IMR-90 (cell line): ENCODE measurements at regions of chr17 and their contacts with region 1.

Region 1: DNA sequence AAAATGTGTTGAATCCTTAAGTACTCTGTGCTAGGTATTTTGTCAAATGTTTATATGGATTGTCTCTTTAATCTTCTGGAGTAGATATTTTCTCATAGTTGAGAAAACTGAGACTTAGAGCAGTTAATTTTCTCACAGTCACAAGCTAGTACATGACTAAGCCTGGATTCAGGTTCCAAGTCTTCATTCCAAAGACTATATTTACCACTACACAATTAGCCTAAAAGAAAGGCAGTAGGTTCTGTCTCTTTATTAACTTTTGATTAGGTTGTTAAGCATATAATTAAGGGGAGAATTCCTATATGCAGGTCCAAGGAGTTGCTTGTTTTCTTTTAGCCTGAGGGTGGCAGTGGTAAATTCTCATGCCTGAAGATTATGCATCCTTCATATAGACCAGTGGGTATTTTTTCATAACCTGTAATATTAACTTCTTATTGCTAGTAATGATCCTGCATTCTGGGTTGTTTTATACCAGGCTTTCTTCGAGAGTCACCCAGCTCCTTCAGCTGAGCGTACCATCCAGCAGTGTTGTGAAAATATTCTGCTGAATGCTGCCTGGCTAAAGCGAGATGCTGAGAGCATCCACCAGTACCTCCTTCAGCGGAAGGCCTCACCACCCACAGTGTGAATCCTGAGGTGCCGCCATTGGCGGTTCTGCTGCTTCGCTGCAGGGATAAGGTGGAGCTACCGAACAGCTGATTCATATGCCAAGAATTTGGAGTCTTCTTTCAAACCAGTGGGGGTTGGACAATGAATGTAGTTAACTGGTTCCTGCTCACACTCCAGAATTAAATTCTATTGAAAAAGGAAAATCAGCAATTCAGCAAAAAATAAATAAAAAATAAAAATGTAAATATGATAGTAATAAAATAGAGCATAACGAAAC is 28.2 kb upstream of the KPNB1 start:
- DNase-seq: peak; percentile 91
- ATAC-seq: peak; percentile 93
- H3K4me3 ChIP-seq: no peak overlapping the region
- H3K27ac ChIP-seq: peak overlapping the region; percentile 63
- H3K4me1 ChIP-seq: peaks cover 13% of the 10 kb centered on the region
- H3K27me3 ChIP-seq: no peaks in the 10 kb centered on the region
- CTCF ChIP-seq: no peak
- POLR2A ChIP-seq: no peak
- RAD21 ChIP-seq: no peak

Region 2: DNA sequence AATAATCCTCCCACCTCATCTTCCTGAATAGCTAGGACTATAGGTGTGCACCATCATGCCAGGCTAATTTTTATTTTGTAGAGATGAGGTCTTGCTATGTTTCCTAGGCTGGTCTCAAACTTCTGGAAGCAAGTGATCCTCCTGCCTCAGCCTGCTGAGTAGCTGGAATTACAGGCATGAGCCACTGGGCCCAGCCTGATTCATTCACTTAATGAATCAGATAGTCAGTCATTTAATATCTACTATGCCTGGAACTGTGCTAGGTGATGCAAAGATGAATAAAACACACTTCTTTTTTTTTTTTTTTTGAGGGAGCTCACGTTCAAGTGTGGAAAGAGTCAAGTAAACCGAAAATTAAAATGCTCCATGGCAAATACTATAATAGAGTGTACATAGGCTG is 258.4 kb before region 1 on chr17:
- CTCF ChIA-PET with region 1: no interaction called
- POLR2A ChIA-PET with region 1: no interaction called
- dilution Hi-C with region 1: no loop called
- in situ Hi-C with region 1: no loop called
- intact Hi-C with region 1: loop called (anchors 5 kb)
- DNase-seq: no peak
- ATAC-seq: no peak
- H3K4me3 ChIP-seq: no peak overlapping the region
- H3K27ac ChIP-seq: no peak overlapping the region
- H3K4me1 ChIP-seq: no peaks in the 10 kb centered on the region
- H3K27me3 ChIP-seq: no peaks in the 10 kb centered on the region
- CTCF ChIP-seq: no peak
- POLR2A ChIP-seq: no peak
- RAD21 ChIP-seq: no peak

Region 3: GRCh38 chr17:47404006-47404405 is 217.5 kb before region 1 on chr17:
- CTCF ChIA-PET with region 1: no interaction called
- POLR2A ChIA-PET with region 1: no interaction called
- dilution Hi-C with region 1: no loop called
- in situ Hi-C with region 1: no loop called
- intact Hi-C with region 1: no loop called
- DNase-seq: no peak
- ATAC-seq: no peak
- H3K4me3 ChIP-seq: no peak overlapping the region
- H3K27ac ChIP-seq: no peak overlapping the region
- H3K4me1 ChIP-seq: no peaks in the 10 kb centered on the region
- H3K27me3 ChIP-seq: no peaks in the 10 kb centered on the region
- CTCF ChIP-seq: no peak
- POLR2A ChIP-seq: no peak
- RAD21 ChIP-seq: no peak

Region 4: GRCh38 chr17:47717261-47717697 is 95.7 kb after region 1 on chr17:
- CTCF ChIA-PET with region 1: no interaction called
- POLR2A ChIA-PET with region 1: no interaction called
- dilution Hi-C with region 1: no loop called
- in situ Hi-C with region 1: no loop called
- intact Hi-C with region 1: no loop called
- DNase-seq: no peak
- ATAC-seq: no peak
- H3K4me3 ChIP-seq: no peak overlapping the region
- H3K27ac ChIP-seq: no peak overlapping the region
- H3K4me1 ChIP-seq: peaks cover 27% of the 10 kb centered on the region
- H3K27me3 ChIP-seq: peaks cover 93% of the 10 kb centered on the region
- CTCF ChIP-seq: peak; percentile 39
- POLR2A ChIP-seq: no peak
- RAD21 ChIP-seq: no peak